CD14-positive monocyte (primary cell): ENCODE measurements at regions of chr4 and their contacts with region 1.

Region 1: GRCh38 chr4:90025248-90025647 is 101.9 kb upstream of the CCSER1 start:
- DNase-seq: no peak
- H3K4me3 ChIP-seq: no peak overlapping the region
- H3K4me3 Mint-ChIP-seq: no peak overlapping the region
- H3K27ac ChIP-seq: no peak overlapping the region
- H3K27ac Mint-ChIP-seq: no peak overlapping the region
- H3K4me1 ChIP-seq: peaks cover 6 to 15% of the 10 kb centered on the region in 2 donors
- H3K4me1 Mint-ChIP-seq: peaks cover 19% of the 10 kb centered on the region
- H3K27me3 ChIP-seq: no peaks in the 10 kb centered on the region
- H3K27me3 Mint-ChIP-seq: peaks cover 0 to 2% (median 1%) of the 10 kb centered on the region in 3 donors
- CTCF ChIP-seq: peak; percentile 24

Region 2: GRCh38 chr4:90078440-90078839 is 53.2 kb after region 1 on chr4:
- intact Hi-C with region 1: loop called in 1 of 2 experiments (anchors 10 kb)
- DNase-seq: peak; percentile 36 to 68 (median 44)
- H3K4me3 ChIP-seq: no peak overlapping the region
- H3K4me3 Mint-ChIP-seq: peak overlapping the region in 1 of 2 donors; percentile 33
- H3K27ac ChIP-seq: peak overlapping the region in 1 of 2 donors; percentile 5
- H3K27ac Mint-ChIP-seq: peak overlapping the region in 5 of 7 donors; percentile 16 to 64 (median 48)
- H3K4me1 ChIP-seq: peaks cover 24 to 27% of the 10 kb centered on the region in 2 donors
- H3K4me1 Mint-ChIP-seq: peaks cover 23% of the 10 kb centered on the region
- H3K27me3 ChIP-seq: no peaks in the 10 kb centered on the region
- H3K27me3 Mint-ChIP-seq: peaks cover 0 to 4% (median 2%) of the 10 kb centered on the region in 3 donors
- CTCF ChIP-seq: no peak

Region 3: DNA sequence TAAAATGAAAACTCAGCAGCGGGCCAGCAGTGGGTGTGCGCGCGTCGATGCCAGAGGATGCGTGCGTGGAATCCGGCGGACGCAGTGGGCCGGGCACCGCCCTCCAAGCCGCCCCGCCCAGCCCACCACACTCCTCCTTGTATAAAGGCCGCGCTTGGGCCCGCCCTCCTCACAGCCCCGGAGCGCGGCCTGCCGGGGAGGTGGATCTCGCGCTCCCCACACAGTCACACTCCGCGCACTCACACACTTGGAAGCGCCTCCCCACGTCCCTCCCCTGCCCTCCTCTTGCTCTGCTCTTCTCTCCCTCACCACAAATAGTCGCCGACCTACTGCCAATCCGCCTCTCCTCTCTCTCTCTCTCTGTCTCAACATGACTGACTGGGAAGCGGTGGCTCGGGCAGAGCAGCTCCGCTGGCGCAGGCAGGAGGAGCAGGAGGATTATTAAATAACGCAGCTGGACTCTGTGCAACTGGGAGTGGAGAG is 102.0 kb after region 1 on chr4 and contains the start of gene CCSER1:
- intact Hi-C with region 1: loop called in 1 of 2 experiments (anchors 10 kb)
- DNase-seq: peak; percentile 38 to 70 (median 64)
- H3K4me3 ChIP-seq: peak within 1 kb of the TSS; percentile 55 to 83 (median 62)
- H3K4me3 Mint-ChIP-seq: peak within 1 kb of the TSS; percentile 97 to 100
- H3K27ac ChIP-seq: peak within 1 kb of the TSS; percentile 24 to 67
- H3K27ac Mint-ChIP-seq: peak within 1 kb of the TSS in 6 of 7 donors; percentile 35 to 87 (median 82)
- H3K4me1 ChIP-seq: peaks cover 24 to 31% of the 10 kb centered on the region in 2 donors
- H3K4me1 Mint-ChIP-seq: peaks cover 24% of the 10 kb centered on the region
- H3K27me3 ChIP-seq: peaks cover 2 to 10% of the 10 kb centered on the region in 2 donors
- H3K27me3 Mint-ChIP-seq: peaks cover 12 to 14% (median 13%) of the 10 kb centered on the region in 3 donors
- CTCF ChIP-seq: no peak
- polyA plus RNA-seq, gene CCSER1: 0.09 to 0.75 (median 0.13) TPM